CD8-positive, alpha-beta memory T cell (primary cell): ENCODE measurements at regions of chr2 and their contacts with region 1.

Region 1: DNA sequence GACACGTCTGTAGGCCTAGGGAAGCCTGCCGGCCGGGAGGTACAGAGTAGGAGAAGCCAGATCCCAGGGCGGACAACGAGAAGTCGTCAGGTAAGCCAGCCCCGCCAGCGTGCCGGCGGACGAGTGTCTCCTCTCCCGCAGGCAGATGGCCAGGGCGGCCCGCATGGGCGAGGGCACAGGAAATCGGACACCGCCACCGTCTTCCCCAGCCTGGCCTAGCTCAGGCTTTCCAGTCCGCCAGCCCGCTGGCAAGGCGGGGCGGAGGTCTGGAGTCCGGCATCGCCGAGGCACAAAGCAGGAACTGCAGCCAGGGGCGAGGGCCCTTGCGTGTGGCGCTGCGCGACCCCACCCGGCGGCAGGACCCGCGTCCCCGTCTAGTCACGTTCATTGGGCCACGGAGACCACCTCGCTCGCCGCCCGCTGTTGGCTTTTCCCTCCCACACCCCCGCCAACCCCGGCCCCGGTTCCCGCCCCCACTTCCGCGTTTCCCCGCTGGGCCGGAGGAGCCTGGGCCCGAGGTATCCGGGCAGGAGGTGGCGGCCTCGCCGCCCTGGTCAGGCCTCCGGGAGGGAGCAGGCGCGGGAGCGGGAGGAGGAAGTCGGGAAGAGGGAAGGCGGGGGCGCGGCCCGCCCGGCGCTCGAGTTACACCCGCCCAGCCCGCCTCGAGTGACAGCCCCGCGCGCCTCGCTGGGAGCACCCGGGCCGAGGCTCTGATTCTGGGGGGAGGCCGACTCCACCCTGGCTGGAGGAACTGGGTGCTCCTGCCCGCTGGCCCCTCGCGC is at the start of gene GPD2:
- DNase-seq: peak; percentile 51 to 80 (median 65)
- H3K4me3 ChIP-seq: peak within 1 kb of the TSS; percentile 82
- H3K4me3 Mint-ChIP-seq: peak within 1 kb of the TSS; percentile 91 to 98 (median 95)
- H3K27ac ChIP-seq: peak within 1 kb of the TSS; percentile 62
- H3K27ac Mint-ChIP-seq: peak within 1 kb of the TSS; percentile 88 to 98 (median 96)
- H3K4me1 ChIP-seq: peaks cover 21% of the 10 kb centered on the region
- H3K4me1 Mint-ChIP-seq: peaks cover 30 to 45% (median 40%) of the 10 kb centered on the region in 3 donors
- H3K27me3 ChIP-seq: no peaks in the 10 kb centered on the region
- H3K27me3 Mint-ChIP-seq: no peaks in the 10 kb centered on the region
- total RNA-seq, gene GPD2: 38.9 to 44.3 TPM

Region 2: DNA sequence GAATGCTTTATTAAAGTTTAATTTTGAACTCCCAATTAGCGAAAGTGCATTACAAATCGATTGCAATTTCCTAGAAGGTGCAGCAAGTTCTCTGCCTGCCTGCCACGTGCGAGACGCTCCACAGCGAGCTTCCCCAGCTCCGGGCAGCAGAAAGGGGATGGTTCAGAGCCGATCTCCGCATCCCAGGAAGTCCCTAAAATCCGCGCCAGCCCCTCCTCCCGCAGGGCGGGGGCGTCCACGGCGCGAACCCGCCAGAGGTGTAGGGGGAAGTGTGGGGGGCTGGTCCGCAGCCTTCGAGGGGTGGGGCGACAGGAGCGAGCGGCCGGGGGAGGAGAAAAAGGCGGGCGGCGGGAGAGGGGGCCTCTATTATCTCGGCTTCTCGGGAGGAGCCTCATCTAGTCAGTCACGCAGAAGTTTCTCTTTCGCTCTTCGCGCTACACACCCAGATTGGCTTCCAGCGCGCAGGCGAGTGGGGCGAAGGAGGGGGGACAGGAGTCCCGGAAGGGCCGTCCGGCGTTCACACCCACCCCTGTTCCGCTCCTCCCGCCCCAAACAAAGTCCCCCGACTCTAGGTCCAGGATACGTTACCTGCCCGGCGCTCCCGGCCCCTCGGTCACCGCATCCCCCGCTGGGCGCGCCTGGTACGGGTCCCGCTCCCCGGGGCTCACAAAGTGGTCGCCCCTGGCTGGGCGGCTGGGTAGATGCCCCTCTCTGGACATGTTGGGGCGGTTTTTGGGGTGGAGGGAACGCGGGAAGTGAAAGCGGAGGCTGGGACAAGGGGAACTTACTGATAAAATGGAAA is 94.3 kb before region 1 on chr2:
- CTCF ChIA-PET with region 1: interaction called, 4 read pairs
- POLR2A ChIA-PET with region 1: interaction called, 10 read pairs
- DNase-seq: peak; percentile 84 to 93 (median 87)
- H3K4me3 ChIP-seq: peak overlapping the region; percentile 86
- H3K4me3 Mint-ChIP-seq: peak overlapping the region; percentile 92 to 97 (median 94)
- H3K27ac ChIP-seq: peak overlapping the region; percentile 99
- H3K27ac Mint-ChIP-seq: peak overlapping the region; percentile 95 to 100 (median 99)
- H3K4me1 ChIP-seq: peaks cover 23% of the 10 kb centered on the region
- H3K4me1 Mint-ChIP-seq: peaks cover 31 to 55% (median 45%) of the 10 kb centered on the region in 3 donors
- H3K27me3 ChIP-seq: no peaks in the 10 kb centered on the region
- H3K27me3 Mint-ChIP-seq: peaks cover 0 to 5% of the 10 kb centered on the region in 2 donors

Region 3: DNA sequence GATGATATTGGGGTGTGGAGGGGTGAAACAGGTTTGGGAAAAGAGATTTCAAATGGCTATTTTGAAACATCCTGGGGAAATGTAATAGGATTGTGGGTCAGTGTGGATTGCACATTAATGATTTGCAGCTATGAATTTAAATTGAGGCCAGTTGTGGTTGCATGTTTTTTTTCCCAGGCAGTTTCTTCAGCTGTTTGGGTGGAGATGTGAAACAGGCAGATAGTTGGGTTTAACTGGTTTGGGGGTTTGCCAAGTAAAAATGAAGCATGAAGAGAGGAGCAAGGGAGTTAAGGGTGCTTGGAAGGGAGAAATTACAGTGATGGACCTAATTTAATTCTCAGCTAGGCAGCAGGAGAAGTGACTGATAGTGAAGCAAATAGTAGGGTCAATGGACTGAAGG is 17.1 kb after region 1 on chr2:
- CTCF ChIA-PET with region 1: no interaction called
- POLR2A ChIA-PET with region 1: no interaction called
- DNase-seq: no peak
- H3K4me3 ChIP-seq: no peak overlapping the region
- H3K4me3 Mint-ChIP-seq: no peak overlapping the region
- H3K27ac ChIP-seq: no peak overlapping the region
- H3K27ac Mint-ChIP-seq: peak overlapping the region in 2 of 8 donors; percentile 36 to 67
- H3K4me1 ChIP-seq: no peaks in the 10 kb centered on the region
- H3K4me1 Mint-ChIP-seq: peaks cover 32 to 59% (median 54%) of the 10 kb centered on the region in 3 donors
- H3K27me3 ChIP-seq: no peaks in the 10 kb centered on the region
- H3K27me3 Mint-ChIP-seq: no peaks in the 10 kb centered on the region

Region 4: GRCh38 chr2:156476850-156477206 is 40.9 kb after region 1 on chr2:
- CTCF ChIA-PET with region 1: no interaction called
- POLR2A ChIA-PET with region 1: no interaction called
- DNase-seq: no peak
- H3K4me3 ChIP-seq: no peak overlapping the region
- H3K4me3 Mint-ChIP-seq: peak overlapping the region in 6 of 7 donors; percentile 0 to 68 (median 36)
- H3K27ac ChIP-seq: no peak overlapping the region
- H3K27ac Mint-ChIP-seq: peak overlapping the region in 7 of 8 donors; percentile 24 to 86 (median 44)
- H3K4me1 ChIP-seq: no peaks in the 10 kb centered on the region
- H3K4me1 Mint-ChIP-seq: peaks cover 58 to 80% (median 75%) of the 10 kb centered on the region in 3 donors
- H3K27me3 ChIP-seq: no peaks in the 10 kb centered on the region
- H3K27me3 Mint-ChIP-seq: no peaks in the 10 kb centered on the region